CD8-positive, alpha-beta T cell (primary cell): ENCODE measurements at regions of chr4 and their contacts with region 1.

Region 1: GRCh38 chr4:147805946-147806345 is 74.1 kb downstream of the ARHGAP10 start:
- DNase-seq: no peak
- ATAC-seq: no peak
- H3K4me3 ChIP-seq: no peak overlapping the region
- H3K4me3 Mint-ChIP-seq: no peak overlapping the region
- H3K27ac ChIP-seq: no peak overlapping the region
- H3K27ac Mint-ChIP-seq: no peak overlapping the region
- H3K4me1 ChIP-seq: no peaks in the 10 kb centered on the region
- H3K4me1 Mint-ChIP-seq: peaks cover 1% of the 10 kb centered on the region
- H3K27me3 ChIP-seq: no peaks in the 10 kb centered on the region
- H3K27me3 Mint-ChIP-seq: no peaks in the 10 kb centered on the region
- CTCF ChIP-seq: no peak

Region 2: GRCh38 chr4:147693218-147693617 is 112.7 kb before region 1 on chr4:
- CTCF ChIA-PET with region 1: no interaction called
- POLR2A ChIA-PET with region 1: no interaction called
- intact Hi-C with region 1: no loop called
- DNase-seq: no peak
- ATAC-seq: no peak
- H3K4me3 ChIP-seq: no peak overlapping the region
- H3K4me3 Mint-ChIP-seq: no peak overlapping the region
- H3K27ac ChIP-seq: no peak overlapping the region
- H3K27ac Mint-ChIP-seq: no peak overlapping the region
- H3K4me1 ChIP-seq: peaks cover 5% of the 10 kb centered on the region
- H3K4me1 Mint-ChIP-seq: peaks cover 5% of the 10 kb centered on the region
- H3K27me3 ChIP-seq: no peaks in the 10 kb centered on the region
- H3K27me3 Mint-ChIP-seq: peaks cover 22% of the 10 kb centered on the region
- CTCF ChIP-seq: no peak

Region 3: GRCh38 chr4:147793569-147794313 is 12.2 kb before region 1 on chr4:
- CTCF ChIA-PET with region 1: interaction called, 4 read pairs
- POLR2A ChIA-PET with region 1: no interaction called
- intact Hi-C with region 1: loop called in 1 of 2 experiments (anchors 2 kb)
- DNase-seq: peak in 2 of 9 experiments; percentile 18 to 35
- ATAC-seq: no peak
- H3K4me3 ChIP-seq: no peak overlapping the region
- H3K4me3 Mint-ChIP-seq: peak overlapping the region; percentile 88
- H3K27ac ChIP-seq: no peak overlapping the region
- H3K27ac Mint-ChIP-seq: peak overlapping the region; percentile 3
- H3K4me1 ChIP-seq: peaks cover 19% of the 10 kb centered on the region
- H3K4me1 Mint-ChIP-seq: peaks cover 37% of the 10 kb centered on the region
- H3K27me3 ChIP-seq: no peaks in the 10 kb centered on the region
- H3K27me3 Mint-ChIP-seq: no peaks in the 10 kb centered on the region
- CTCF ChIP-seq: no peak